CD8-positive, alpha-beta T cell (primary cell): ENCODE measurements at regions of chr7 and their contacts with region 1.

Region 1: GRCh38 chr7:20033621-20034400 is 183.4 kb downstream of the MACC1 start:
- DNase-seq: no peak
- ATAC-seq: no peak
- H3K4me3 ChIP-seq: no peak overlapping the region
- H3K4me3 Mint-ChIP-seq: no peak overlapping the region
- H3K27ac ChIP-seq: no peak overlapping the region
- H3K27ac Mint-ChIP-seq: no peak overlapping the region
- H3K4me1 ChIP-seq: no peaks in the 10 kb centered on the region
- H3K4me1 Mint-ChIP-seq: no peaks in the 10 kb centered on the region
- H3K27me3 ChIP-seq: no peaks in the 10 kb centered on the region
- H3K27me3 Mint-ChIP-seq: no peaks in the 10 kb centered on the region
- CTCF ChIP-seq: no peak

Region 2: DNA sequence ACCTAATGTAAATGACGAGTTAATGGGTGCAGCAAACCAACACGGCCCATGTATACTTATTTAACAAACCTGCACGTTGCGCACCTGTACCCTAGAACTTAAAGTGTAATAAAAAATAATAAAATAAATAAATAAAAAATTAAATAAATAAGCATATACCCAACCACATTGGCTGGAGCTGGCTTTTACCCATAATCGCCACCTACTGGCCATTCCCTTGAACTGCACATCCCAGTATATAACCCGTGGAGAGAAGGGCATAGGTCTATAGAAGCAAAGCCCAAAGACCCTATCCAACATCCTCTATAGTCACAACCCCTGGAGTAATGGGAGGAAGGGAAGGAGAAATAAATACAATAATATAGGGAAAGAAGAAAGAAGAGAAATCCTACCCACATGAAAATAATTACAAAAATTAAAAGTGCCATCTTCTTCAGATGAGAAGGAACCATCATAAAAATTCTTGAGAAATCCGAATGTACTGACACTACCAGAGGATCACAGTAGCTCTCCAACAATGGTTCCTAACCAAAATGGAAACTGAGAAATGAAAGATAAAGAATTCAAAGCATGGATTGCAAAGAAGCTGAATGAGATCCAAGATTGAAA is 981.9 kb before region 1 on chr7:
- CTCF ChIA-PET with region 1: no interaction called
- POLR2A ChIA-PET with region 1: no interaction called
- intact Hi-C with region 1: no loop called
- DNase-seq: peak in 4 of 9 experiments; percentile 11 to 35 (median 19)
- ATAC-seq: no peak
- H3K4me3 ChIP-seq: no peak overlapping the region
- H3K4me3 Mint-ChIP-seq: no peak overlapping the region
- H3K27ac ChIP-seq: no peak overlapping the region
- H3K27ac Mint-ChIP-seq: no peak overlapping the region
- H3K4me1 ChIP-seq: no peaks in the 10 kb centered on the region
- H3K4me1 Mint-ChIP-seq: no peaks in the 10 kb centered on the region
- H3K27me3 ChIP-seq: no peaks in the 10 kb centered on the region
- H3K27me3 Mint-ChIP-seq: no peaks in the 10 kb centered on the region
- CTCF ChIP-seq: peak; percentile 77

Region 3: GRCh38 chr7:19090526-19090925 is 943.3 kb before region 1 on chr7:
- CTCF ChIA-PET with region 1: no interaction called
- POLR2A ChIA-PET with region 1: no interaction called
- intact Hi-C with region 1: no loop called
- DNase-seq: no peak
- ATAC-seq: no peak
- H3K4me3 ChIP-seq: no peak overlapping the region
- H3K4me3 Mint-ChIP-seq: no peak overlapping the region
- H3K27ac ChIP-seq: no peak overlapping the region
- H3K27ac Mint-ChIP-seq: no peak overlapping the region
- H3K4me1 ChIP-seq: no peaks in the 10 kb centered on the region
- H3K4me1 Mint-ChIP-seq: no peaks in the 10 kb centered on the region
- H3K27me3 ChIP-seq: no peaks in the 10 kb centered on the region
- H3K27me3 Mint-ChIP-seq: no peaks in the 10 kb centered on the region
- CTCF ChIP-seq: no peak

Region 4: GRCh38 chr7:20005081-20005480 is 28.7 kb before region 1 on chr7:
- CTCF ChIA-PET with region 1: no interaction called
- POLR2A ChIA-PET with region 1: no interaction called
- intact Hi-C with region 1: loop called in 1 of 2 experiments (anchors 2 kb)
- DNase-seq: no peak
- ATAC-seq: no peak
- H3K4me3 ChIP-seq: no peak overlapping the region
- H3K4me3 Mint-ChIP-seq: no peak overlapping the region
- H3K27ac ChIP-seq: no peak overlapping the region
- H3K27ac Mint-ChIP-seq: no peak overlapping the region
- H3K4me1 ChIP-seq: no peaks in the 10 kb centered on the region
- H3K4me1 Mint-ChIP-seq: no peaks in the 10 kb centered on the region
- H3K27me3 ChIP-seq: no peaks in the 10 kb centered on the region
- H3K27me3 Mint-ChIP-seq: no peaks in the 10 kb centered on the region
- CTCF ChIP-seq: no peak

Region 5: DNA sequence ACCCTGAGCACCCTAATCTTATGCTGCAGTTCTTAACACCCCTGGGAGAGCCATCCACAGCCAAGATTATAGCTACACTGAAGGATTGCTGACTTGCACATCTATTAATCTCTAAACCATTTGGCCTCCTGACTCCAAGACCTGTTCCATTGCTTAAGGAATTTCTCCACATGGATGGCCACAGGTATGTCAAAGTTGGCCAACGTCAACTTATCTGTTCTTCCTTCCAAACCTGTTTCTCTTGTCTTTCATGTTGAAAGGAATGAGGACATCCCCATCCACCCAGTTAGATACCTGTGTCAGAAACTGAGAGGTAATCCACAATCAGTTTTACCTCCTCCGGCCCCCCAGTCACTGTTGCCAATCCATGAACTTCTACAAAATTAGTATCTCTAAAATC is 172.7 kb after region 1 on chr7:
- CTCF ChIA-PET with region 1: no interaction called
- POLR2A ChIA-PET with region 1: no interaction called
- intact Hi-C with region 1: no loop called
- DNase-seq: no peak
- ATAC-seq: no peak
- H3K4me3 ChIP-seq: no peak overlapping the region
- H3K4me3 Mint-ChIP-seq: no peak overlapping the region
- H3K27ac ChIP-seq: no peak overlapping the region
- H3K27ac Mint-ChIP-seq: no peak overlapping the region
- H3K4me1 ChIP-seq: no peaks in the 10 kb centered on the region
- H3K4me1 Mint-ChIP-seq: no peaks in the 10 kb centered on the region
- H3K27me3 ChIP-seq: no peaks in the 10 kb centered on the region
- H3K27me3 Mint-ChIP-seq: no peaks in the 10 kb centered on the region
- CTCF ChIP-seq: no peak